ENCODE measurements at regions of chrX and their contacts with region 1.

Region 1: GRCh38 chrX:56729152-56729850 is at the start of gene NBDY:
- DNase-seq: no peak
- ATAC-seq: peak; percentile 86
- H3K4me3 ChIP-seq: peak within 1 kb of the TSS; percentile 84
- H3K27ac ChIP-seq: peak within 1 kb of the TSS; percentile 74
- H3K4me1 ChIP-seq: no peaks in the 10 kb centered on the region
- H3K27me3 ChIP-seq: no peaks in the 10 kb centered on the region
- CTCF ChIP-seq: no peak
- EP300 ChIP-seq: no peak
- POLR2A ChIP-seq: peak; percentile 59
- RAD21 ChIP-seq: no peak
- polyA plus RNA-seq, gene NBDY: 113 to 115 TPM

Region 2: GRCh38 chrX:55451990-55452832 is 1277.1 kb before region 1 on chrX and contains the start of gene MAGEH1:
- CTCF ChIA-PET with region 1: no interaction called
- POLR2A ChIA-PET with region 1: no interaction called
- RAD21 ChIA-PET with region 1: interaction called, 3 read pairs
- SMC1A ChIA-PET with region 1: no interaction called
- in situ Hi-C with region 1: loop called (anchors 25 kb)
- intact Hi-C with region 1: no loop called
- DNase-seq: peak; percentile 55
- ATAC-seq: peak; percentile 98
- H3K4me3 ChIP-seq: peak within 1 kb of the TSS; percentile 84
- H3K27ac ChIP-seq: peak within 1 kb of the TSS; percentile 55
- H3K4me1 ChIP-seq: no peaks in the 10 kb centered on the region
- H3K27me3 ChIP-seq: no peaks in the 10 kb centered on the region
- CTCF ChIP-seq: no peak
- EP300 ChIP-seq: no peak
- POLR2A ChIP-seq: peak; percentile 83
- RAD21 ChIP-seq: no peak
- polyA plus RNA-seq, gene MAGEH1: 8.7 to 9.1 TPM

Region 3: DNA sequence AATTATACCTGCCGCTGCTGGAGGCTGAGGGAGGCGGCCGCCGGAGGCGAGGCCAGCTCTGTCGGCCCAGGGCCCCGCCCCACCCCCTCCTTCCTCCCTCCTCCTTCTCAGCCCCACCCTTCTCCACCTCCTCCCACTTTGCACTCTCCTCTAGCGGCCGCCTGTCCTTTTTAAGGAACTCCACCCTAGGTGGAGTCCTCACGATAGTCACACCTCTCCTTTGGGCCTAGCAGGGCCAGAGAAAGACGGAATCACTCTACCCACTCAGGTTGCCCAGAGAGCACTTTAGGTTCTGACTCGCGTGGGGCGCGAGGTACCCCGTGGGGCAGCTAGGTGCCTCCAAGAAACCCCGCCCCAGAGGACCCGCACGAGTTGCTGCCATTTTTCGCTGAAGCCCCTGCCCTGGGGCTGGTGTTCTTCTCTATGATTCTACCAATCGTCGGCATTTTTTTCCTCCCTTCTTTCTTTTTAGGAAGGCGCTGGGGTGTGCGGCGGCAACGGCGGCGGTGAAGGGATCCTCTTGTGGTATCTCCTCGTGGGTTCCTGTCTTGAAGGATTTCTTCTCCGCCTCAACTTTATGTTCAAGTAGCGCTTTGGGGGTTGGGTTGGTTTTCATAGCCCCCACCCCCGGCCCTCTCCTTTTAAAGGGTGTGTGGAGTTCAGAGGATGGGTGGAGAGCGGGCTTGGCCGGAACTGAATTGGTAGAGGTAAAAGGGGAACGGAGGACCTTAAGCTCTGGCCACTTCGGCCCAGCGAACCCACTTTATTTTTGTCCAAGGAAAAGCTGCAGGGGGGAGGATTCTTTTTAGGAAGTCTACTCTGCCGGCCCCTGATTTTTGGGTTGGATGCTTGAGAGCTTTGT is 496.8 kb before region 1 on chrX and contains the start of gene KLF8:
- CTCF ChIA-PET with region 1: interaction called, 10 read pairs
- POLR2A ChIA-PET with region 1: interaction called, 4 read pairs
- RAD21 ChIA-PET with region 1: interaction called, 5 read pairs
- SMC1A ChIA-PET with region 1: interaction called, 3 read pairs
- in situ Hi-C with region 1: no loop called
- intact Hi-C with region 1: no loop called
- DNase-seq: no peak
- ATAC-seq: peak; percentile 79
- H3K4me3 ChIP-seq: peak within 1 kb of the TSS; percentile 49
- H3K27ac ChIP-seq: peak within 1 kb of the TSS; percentile 25; the same call in 1 of the 2 replicates
- H3K4me1 ChIP-seq: no peaks in the 10 kb centered on the region
- H3K27me3 ChIP-seq: no peaks in the 10 kb centered on the region
- CTCF ChIP-seq: no peak
- EP300 ChIP-seq: no peak
- POLR2A ChIP-seq: no peak
- RAD21 ChIP-seq: no peak
- polyA plus RNA-seq, gene KLF8: 0.31 to 0.39 TPM

Region 4: DNA sequence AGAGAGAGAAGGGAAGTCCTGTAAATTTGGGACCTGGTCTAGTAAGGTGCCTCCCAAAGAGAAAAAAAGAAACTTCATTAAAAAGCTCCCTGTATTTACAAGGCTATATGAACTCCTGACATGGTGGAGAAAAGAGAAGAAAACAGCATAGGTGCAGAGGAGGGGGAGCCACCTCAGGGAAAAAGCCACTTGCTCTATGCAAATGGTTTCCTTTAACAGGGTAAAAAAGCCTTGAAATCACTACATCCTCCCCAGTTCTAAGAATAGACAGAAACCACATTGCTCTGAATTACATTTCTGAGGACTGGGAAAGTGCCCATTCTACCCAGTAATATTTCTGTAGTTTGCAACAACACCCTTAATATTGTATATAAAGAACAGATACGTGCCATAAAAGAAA is 331.7 kb before region 1 on chrX:
- CTCF ChIA-PET with region 1: no interaction called
- POLR2A ChIA-PET with region 1: no interaction called
- RAD21 ChIA-PET with region 1: no interaction called
- SMC1A ChIA-PET with region 1: no interaction called
- in situ Hi-C with region 1: no loop called
- intact Hi-C with region 1: no loop called
- DNase-seq: no peak
- ATAC-seq: no peak
- H3K4me3 ChIP-seq: no peak overlapping the region
- H3K27ac ChIP-seq: no peak overlapping the region
- H3K4me1 ChIP-seq: no peaks in the 10 kb centered on the region
- H3K27me3 ChIP-seq: no peaks in the 10 kb centered on the region
- CTCF ChIP-seq: no peak
- EP300 ChIP-seq: no peak
- POLR2A ChIP-seq: no peak
- RAD21 ChIP-seq: no peak

Region 5: GRCh38 chrX:56563231-56564161 is 165.8 kb before region 1 on chrX and contains the start of gene UBQLN2:
- CTCF ChIA-PET with region 1: interaction called, 4 read pairs
- POLR2A ChIA-PET with region 1: no interaction called
- RAD21 ChIA-PET with region 1: interaction called, 3 read pairs
- SMC1A ChIA-PET with region 1: interaction called, 11 read pairs
- in situ Hi-C with region 1: loop called (anchors 25 kb)
- intact Hi-C with region 1: loop called (anchors 5 kb)
- DNase-seq: no peak
- ATAC-seq: peak; percentile 84
- H3K4me3 ChIP-seq: peak within 1 kb of the TSS; percentile 76
- H3K27ac ChIP-seq: peak within 1 kb of the TSS; percentile 77
- H3K4me1 ChIP-seq: no peaks in the 10 kb centered on the region
- H3K27me3 ChIP-seq: no peaks in the 10 kb centered on the region
- CTCF ChIP-seq: no peak
- EP300 ChIP-seq: no peak
- POLR2A ChIP-seq: peak; percentile 93
- RAD21 ChIP-seq: no peak
- polyA plus RNA-seq, gene UBQLN2: 2.4 to 6.2 TPM

Region 6: DNA sequence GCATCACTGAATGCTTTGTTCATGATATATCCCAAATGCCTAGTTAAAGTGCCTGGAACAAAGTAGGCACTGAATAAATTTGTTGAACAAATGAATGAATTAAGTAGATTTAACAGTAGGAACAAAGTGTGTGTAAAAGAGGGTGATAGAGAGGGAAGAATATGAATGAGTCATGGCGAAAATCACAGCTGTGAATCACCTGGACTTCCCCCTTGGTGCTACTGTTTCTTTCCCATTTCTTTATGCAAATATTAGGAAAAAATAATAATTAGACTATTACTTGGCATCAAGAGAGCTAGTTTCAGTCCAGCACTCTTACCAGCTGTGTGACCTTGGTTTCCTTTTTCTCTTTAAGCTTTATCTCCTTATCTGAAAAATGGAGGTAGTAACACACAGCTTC is 256.8 kb after region 1 on chrX:
- CTCF ChIA-PET with region 1: interaction called, 3 read pairs
- POLR2A ChIA-PET with region 1: no interaction called
- RAD21 ChIA-PET with region 1: interaction called, 10 read pairs
- SMC1A ChIA-PET with region 1: interaction called, 3 read pairs
- in situ Hi-C with region 1: no loop called
- intact Hi-C with region 1: no loop called
- DNase-seq: no peak
- ATAC-seq: peak; percentile 67
- H3K4me3 ChIP-seq: no peak overlapping the region
- H3K27ac ChIP-seq: no peak overlapping the region
- H3K4me1 ChIP-seq: no peaks in the 10 kb centered on the region
- H3K27me3 ChIP-seq: no peaks in the 10 kb centered on the region
- CTCF ChIP-seq: no peak
- EP300 ChIP-seq: peak in 1 of 2 experiments; percentile 55; a peak in 1 of 4 replicates
- POLR2A ChIP-seq: no peak
- RAD21 ChIP-seq: no peak

Region 7: GRCh38 chrX:57156397-57157049 is 427.2 kb after region 1 on chrX:
- CTCF ChIA-PET with region 1: no interaction called
- POLR2A ChIA-PET with region 1: no interaction called
- RAD21 ChIA-PET with region 1: no interaction called
- SMC1A ChIA-PET with region 1: no interaction called
- in situ Hi-C with region 1: no loop called
- intact Hi-C with region 1: no loop called
- DNase-seq: no peak
- ATAC-seq: peak; percentile 59; the same call in 2 of the 3 replicates
- H3K4me3 ChIP-seq: no peak overlapping the region
- H3K27ac ChIP-seq: no peak overlapping the region
- H3K4me1 ChIP-seq: no peaks in the 10 kb centered on the region
- H3K27me3 ChIP-seq: no peaks in the 10 kb centered on the region
- CTCF ChIP-seq: peak; percentile 34 to 41 (median 35); a peak in 4 of 6 replicates
- EP300 ChIP-seq: no peak
- POLR2A ChIP-seq: no peak
- RAD21 ChIP-seq: peak; percentile 55

Region 8: DNA sequence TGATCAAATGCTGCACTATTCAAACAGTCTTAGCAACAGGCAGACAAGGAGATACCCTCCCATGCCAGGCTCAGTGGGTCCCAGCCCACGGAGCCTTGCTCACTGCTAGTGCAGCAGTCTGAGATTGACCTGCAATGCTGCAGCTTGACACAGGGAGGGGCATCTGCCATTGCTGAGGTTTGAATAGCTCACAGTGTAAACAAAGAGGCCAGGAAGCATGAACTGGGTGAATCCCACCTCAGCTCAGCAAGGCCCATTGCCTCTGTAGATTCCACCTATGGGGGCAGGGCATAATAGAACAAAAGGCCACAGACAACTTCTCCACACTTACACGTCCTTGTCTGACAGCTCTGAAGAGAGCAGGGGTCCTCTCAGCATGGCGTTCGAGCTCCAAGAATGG is 835.9 kb after region 1 on chrX:
- CTCF ChIA-PET with region 1: no interaction called
- POLR2A ChIA-PET with region 1: no interaction called
- RAD21 ChIA-PET with region 1: no interaction called
- SMC1A ChIA-PET with region 1: no interaction called
- in situ Hi-C with region 1: no loop called
- intact Hi-C with region 1: no loop called
- DNase-seq: no peak
- ATAC-seq: no peak
- H3K4me3 ChIP-seq: no peak overlapping the region
- H3K27ac ChIP-seq: no peak overlapping the region
- H3K4me1 ChIP-seq: no peaks in the 10 kb centered on the region
- H3K27me3 ChIP-seq: no peaks in the 10 kb centered on the region
- CTCF ChIP-seq: no peak
- EP300 ChIP-seq: no peak
- POLR2A ChIP-seq: no peak
- RAD21 ChIP-seq: no peak